Activated T-helper 2 cell treated with anti-CD3 and anti-CD28 coated beads, Interferon-gamma antibody, Interleukin-2, Interleukin-4, amounts not matched to agents 10 μg/mL and 5 μg/mL and 100 μg/mL, durations not matched to agents 14 hours and 24 hours and 36 hours (primary cell): ENCODE measurements at regions of chr6 and their contacts with region 1.

Region 1: DNA sequence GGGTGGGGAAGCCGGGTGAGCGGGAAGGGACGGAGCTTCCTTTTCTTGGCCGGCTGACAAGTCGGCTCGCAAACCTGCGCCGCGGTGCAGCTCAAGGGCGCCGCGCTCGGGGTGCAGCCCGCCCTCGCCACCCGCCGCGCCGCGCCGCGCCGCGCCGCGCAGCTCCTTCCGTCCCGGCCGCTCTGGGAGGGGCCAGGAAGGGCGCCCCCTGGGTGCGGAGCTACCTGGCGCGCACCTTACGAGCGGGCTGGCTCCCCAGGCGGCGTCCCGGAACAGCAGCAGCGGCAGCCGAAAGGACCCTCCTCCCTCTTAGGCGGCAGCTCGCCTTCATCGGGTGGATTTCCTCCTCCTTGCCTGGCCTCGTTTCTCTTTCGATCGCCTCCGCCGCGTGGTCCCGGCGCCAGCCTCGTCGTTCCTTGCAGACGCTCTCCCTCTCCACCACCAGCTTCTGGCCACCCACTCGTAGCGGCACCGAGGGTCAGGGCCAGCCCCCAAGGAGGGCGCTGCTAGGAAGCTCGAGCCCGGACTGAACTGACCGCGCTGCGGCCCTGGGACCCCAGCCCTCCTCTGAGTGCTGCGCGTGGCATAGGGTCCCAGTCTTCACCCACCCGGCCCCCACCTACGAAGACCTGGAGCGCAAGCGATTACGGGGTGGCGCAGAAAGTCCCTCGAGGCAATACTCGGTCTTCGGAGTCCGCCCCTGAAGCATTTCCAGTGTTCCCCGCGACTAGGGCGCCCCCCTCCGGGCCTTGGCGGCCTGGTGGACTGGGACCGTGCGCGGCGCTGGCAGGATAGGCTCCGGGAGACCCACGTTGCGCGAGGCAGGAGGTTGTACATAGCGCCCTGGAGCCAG is at the start of gene MAP3K5:
- DNase-seq: peak; percentile 89
- H3K4me3 Mint-ChIP-seq: peak within 1 kb of the TSS; percentile 92
- H3K27ac Mint-ChIP-seq: peak within 1 kb of the TSS; percentile 96
- H3K4me1 Mint-ChIP-seq: peaks cover 29% of the 10 kb centered on the region
- H3K27me3 Mint-ChIP-seq: peaks cover 11% of the 10 kb centered on the region
- total RNA-seq, gene MAP3K5: 6.1 and 6.5 TPM in 2 replicates

Region 2: GRCh38 chr6:136552054-136552453 is 240.6 kb before region 1 on chr6:
- intact Hi-C with region 1: no loop called
- DNase-seq: no peak
- H3K4me3 Mint-ChIP-seq: no peak overlapping the region
- H3K27ac Mint-ChIP-seq: no peak overlapping the region
- H3K4me1 Mint-ChIP-seq: peaks cover 7% of the 10 kb centered on the region
- H3K27me3 Mint-ChIP-seq: peaks cover 47% of the 10 kb centered on the region

Region 3: GRCh38 chr6:136607932-136608772 is 184.5 kb before region 1 on chr6:
- intact Hi-C with region 1: loop called (anchors 1 kb)
- DNase-seq: peak; percentile 65
- H3K4me3 Mint-ChIP-seq: no peak overlapping the region
- H3K27ac Mint-ChIP-seq: no peak overlapping the region
- H3K4me1 Mint-ChIP-seq: peaks cover 15% of the 10 kb centered on the region
- H3K27me3 Mint-ChIP-seq: no peaks in the 10 kb centered on the region

Region 4: GRCh38 chr6:136701045-136701444 is 91.6 kb before region 1 on chr6:
- intact Hi-C with region 1: loop called (anchors 5 kb)
- DNase-seq: no peak
- H3K4me3 Mint-ChIP-seq: no peak overlapping the region
- H3K27ac Mint-ChIP-seq: no peak overlapping the region
- H3K4me1 Mint-ChIP-seq: peaks cover 20% of the 10 kb centered on the region
- H3K27me3 Mint-ChIP-seq: no peaks in the 10 kb centered on the region

Region 5: GRCh38 chr6:136782021-136782770 is 10.4 kb before region 1 on chr6:
- intact Hi-C with region 1: loop called (anchors 1 kb)
- DNase-seq: no peak
- H3K4me3 Mint-ChIP-seq: no peak overlapping the region
- H3K27ac Mint-ChIP-seq: peak overlapping the region; percentile 76
- H3K4me1 Mint-ChIP-seq: peaks cover 45% of the 10 kb centered on the region
- H3K27me3 Mint-ChIP-seq: no peaks in the 10 kb centered on the region

Region 6: GRCh38 chr6:137218917-137219663 is 426.5 kb after region 1 on chr6 and contains the start of gene IFNGR1:
- intact Hi-C with region 1: no loop called
- DNase-seq: peak; percentile 93
- H3K4me3 Mint-ChIP-seq: peak within 1 kb of the TSS; percentile 98
- H3K27ac Mint-ChIP-seq: peak within 1 kb of the TSS; percentile 99
- H3K4me1 Mint-ChIP-seq: peaks cover 51% of the 10 kb centered on the region
- H3K27me3 Mint-ChIP-seq: no peaks in the 10 kb centered on the region
- total RNA-seq, gene IFNGR1: 22.2 and 26.2 TPM in 2 replicates